ENCODE measurements at regions of chr5 and their contacts with region 1.

Region 1: DNA sequence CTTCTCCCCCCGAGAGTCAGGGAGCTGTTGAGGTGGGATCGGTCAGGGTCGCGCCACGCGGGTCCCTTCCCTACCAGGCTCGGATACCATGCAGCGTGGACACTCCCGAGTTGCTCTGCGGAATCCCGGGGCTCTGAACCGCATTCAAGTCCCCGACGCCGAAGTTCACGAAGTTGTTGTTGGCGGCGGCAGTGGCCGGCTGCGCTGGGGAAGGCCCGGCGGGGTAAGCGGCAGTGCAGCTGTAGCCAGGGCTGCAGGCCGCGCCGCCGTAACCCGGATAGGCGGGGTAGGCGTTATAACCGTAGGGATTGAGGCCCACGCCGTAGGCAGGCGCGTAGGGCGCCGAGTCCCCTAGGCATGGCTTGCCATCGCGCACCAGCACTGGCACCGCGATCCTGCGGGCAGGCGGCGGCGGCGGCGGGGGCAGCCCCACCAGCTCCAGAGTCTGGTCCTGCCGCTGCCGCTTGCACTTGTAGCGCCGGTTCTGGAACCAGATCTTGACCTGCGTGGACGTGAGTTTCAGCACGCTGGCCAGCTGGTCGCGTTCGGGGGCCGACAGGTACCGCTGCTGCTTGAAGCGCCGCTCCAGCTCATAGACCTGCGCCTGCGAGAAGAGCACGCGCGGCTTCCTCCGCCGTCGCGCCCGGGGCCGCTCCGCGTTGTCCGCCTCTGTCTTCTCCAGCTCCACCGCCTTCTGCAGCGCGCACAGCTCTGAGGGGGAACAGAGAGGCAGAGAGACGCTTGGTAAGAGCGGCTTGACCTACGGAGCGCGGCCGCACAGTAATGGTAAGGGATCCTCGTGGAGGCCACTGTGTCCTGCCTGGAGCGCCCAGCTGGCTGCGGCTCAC is 2.3 kb downstream of the NKX2-5 start:
- DNase-seq: peak in 1 of 3 donors; percentile 63
- ATAC-seq: no peak
- H3K4me3 ChIP-seq: peak overlapping the region; percentile 51
- H3K27ac ChIP-seq: peak overlapping the region; percentile 18
- H3K4me1 ChIP-seq: peaks cover 2% of the 10 kb centered on the region
- H3K27me3 ChIP-seq: no peaks in the 10 kb centered on the region

Region 2: DNA sequence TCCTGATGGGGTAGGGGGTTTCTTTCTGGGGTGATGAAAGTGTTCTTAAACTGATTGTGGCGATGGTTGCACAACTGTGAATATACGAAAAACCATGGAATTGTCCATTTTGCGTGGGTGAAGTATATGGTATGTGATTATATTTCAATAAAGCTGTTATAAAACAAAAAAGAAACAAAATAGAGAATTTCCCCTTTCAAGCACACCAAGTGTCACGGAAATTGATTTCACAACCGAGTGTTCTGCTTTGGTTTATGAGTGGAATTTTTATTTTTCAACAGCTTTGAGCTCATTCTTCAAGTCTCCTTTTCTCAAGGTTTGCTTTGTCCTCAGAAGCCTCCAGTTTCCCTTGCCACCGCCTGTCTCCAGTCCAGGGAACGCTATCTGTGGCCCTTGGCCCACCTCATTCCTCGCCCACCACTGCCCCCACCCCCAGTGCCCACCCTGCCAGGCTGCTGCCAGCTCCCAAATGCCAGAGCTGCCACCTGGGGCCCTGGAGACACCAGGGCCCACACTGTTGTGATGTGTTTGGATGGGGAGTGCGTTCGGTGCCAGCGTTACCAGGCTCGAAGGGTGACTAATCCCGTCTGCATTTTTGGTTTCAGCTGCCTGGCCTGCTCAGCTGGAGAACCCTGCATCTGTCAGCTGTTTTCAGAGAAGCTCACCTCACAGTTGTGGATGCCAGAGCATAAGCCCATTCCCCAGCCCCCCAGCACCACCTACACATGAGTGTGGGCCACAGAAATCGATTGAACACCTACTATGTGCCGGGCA is 492.1 kb before region 1 on chr5:
- intact Hi-C with region 1: no loop called
- DNase-seq: peak; percentile 81 to 86 (median 86)
- ATAC-seq: peak; percentile 89 to 91
- H3K4me3 ChIP-seq: no peak overlapping the region
- H3K27ac ChIP-seq: peak overlapping the region; percentile 68
- H3K4me1 ChIP-seq: no peaks in the 10 kb centered on the region
- H3K27me3 ChIP-seq: no peaks in the 10 kb centered on the region

Region 3: GRCh38 chr5:173163219-173163618 is 69.5 kb before region 1 on chr5:
- intact Hi-C with region 1: loop called in 3 of 4 experiments (anchors 2 to 5 kb)
- DNase-seq: peak in 1 of 3 donors; percentile 63
- ATAC-seq: peak; percentile 32 to 52
- H3K4me3 ChIP-seq: no peak overlapping the region
- H3K27ac ChIP-seq: peak overlapping the region; percentile 65
- H3K4me1 ChIP-seq: peaks cover 4% of the 10 kb centered on the region
- H3K27me3 ChIP-seq: no peaks in the 10 kb centered on the region

Region 4: DNA sequence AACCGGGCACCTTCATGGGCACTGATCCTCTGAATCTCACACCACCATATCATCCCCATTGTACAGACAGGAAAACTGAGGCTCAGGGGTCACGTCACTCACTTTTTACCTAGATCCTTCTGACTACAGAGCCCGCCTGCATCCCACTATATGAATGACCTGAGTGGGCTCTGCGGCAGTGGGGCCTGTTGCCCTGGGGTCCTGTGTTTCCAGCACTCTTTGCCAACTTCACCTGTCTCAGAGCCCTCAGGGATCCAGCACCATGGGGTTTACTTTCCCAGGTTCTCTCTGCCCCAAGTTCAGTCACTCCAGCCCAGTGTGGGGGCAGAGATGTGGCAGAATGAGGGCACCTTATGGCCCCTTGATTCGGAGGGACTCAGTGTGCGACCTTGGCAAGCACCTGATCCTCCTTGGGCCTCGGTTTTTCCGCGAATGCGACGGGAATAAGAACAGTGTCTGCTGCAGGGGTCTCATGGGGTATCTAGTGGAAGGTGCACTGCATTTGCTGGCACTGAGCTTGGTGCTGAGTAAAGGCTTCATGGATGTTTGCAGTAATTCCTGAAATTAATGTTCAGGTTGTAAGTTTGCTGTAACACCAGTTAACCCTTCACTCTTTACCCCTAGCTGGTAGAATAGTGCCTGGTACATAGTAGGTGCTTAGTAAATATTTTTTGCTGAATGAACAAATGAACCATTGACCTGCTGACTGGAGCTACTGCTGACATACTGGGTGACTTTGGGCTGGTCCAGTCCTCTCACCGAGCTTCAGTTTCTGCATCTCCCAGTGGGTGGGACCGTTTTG is 430.8 kb after region 1 on chr5:
- intact Hi-C with region 1: no loop called
- DNase-seq: no peak
- ATAC-seq: no peak
- H3K4me3 ChIP-seq: no peak overlapping the region
- H3K27ac ChIP-seq: no peak overlapping the region
- H3K4me1 ChIP-seq: peaks cover 2% of the 10 kb centered on the region
- H3K27me3 ChIP-seq: no peaks in the 10 kb centered on the region

Measured in right cardiac atrium (tissue), 5 donors.